Endothelial cell of umbilical vein (primary cell): ENCODE measurements at regions of chr17 and their contacts with region 1.

Region 1: DNA sequence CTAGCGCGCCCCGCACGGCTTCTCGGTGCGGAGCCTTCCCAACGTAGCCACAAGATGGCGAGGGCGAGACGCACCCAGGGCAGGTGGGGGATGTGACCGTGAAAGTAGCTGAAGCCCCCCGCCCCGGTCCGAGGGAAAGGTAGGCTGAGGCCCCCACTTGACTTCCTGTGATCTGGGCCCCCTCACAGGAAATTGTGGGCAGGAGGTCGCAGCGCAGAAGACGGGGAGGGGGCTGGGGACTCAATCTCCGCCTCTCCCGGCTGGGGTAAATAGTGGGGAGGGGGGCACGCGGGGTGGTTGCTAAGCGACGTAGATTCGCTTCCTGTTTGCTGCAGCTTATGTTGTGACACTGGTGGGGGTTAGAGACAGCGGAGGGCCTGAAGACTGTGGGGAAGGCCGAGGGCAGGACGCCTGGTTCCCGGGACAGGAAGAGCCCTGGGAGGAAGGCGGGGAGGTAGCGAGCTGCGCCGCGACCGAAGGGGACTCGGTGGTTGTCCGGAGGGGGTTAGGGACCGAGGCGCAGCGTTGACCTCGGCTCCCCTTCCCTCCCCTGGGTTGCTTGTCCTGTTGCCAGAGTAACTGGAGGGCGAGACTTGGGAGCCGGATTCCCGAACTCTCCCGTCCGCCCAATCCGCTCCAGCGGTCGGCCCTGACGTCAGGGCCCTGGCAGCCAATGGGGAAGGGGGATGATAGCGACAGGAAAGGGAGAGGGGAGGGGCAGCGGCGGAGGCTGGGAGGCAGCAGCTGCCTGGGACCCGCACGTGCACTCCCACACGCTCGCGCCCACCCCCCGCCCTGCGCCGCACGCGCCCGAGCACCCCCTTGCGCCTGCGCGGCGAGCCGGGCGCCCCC is 1.2 kb downstream of the KDM6B start:
- DNase-seq: peak; percentile 100
- H3K4me3 ChIP-seq: peak overlapping the region; percentile 34 to 52 (median 46)
- H3K27ac ChIP-seq: peak overlapping the region; percentile 94
- H3K4me1 ChIP-seq: peaks cover 32% of the 10 kb centered on the region
- H3K27me3 ChIP-seq: peaks cover 0 to 3% of the 10 kb centered on the region in 2 experiments
- CTCF ChIP-seq: peak; percentile 65 to 92
- POLR2A ChIP-seq: no peak

Region 2: DNA sequence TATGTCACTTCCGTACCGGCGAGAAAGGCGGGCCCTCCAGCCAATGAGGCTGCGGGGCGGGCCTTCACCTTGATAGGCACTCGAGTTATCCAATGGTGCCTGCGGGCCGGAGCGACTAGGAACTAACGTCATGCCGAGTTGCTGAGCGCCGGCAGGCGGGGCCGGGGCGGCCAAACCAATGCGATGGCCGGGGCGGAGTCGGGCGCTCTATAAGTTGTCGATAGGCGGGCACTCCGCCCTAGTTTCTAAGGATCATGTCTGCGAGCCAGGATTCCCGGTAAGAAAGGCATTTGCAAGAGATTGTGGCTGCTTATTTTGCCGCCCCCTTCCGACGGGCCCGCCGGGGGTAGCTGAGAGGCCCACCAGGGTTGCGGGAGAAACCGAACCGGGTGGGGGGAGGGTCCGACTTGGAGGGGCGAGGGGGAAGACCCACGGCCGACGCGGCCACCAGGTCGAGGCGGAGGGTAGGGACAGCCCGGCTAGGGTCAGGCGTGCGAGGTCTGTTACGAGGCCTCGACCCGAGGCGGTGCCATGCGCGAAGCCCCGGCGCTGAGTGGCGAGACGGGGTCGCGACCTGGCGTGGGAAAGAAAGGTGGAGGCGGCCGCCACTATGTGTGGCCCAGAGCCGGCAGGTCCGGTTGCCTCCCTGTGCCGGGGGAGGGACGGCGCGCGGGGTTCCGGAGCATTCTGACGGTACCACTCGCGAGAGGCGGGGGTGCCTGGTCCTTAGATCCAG is 262.4 kb before region 1 on chr17:
- CTCF ChIA-PET with region 1: no interaction called
- POLR2A ChIA-PET with region 1: no interaction called
- dilution Hi-C with region 1: no loop called
- intact Hi-C with region 1: loop called (anchors 5 kb)
- DNase-seq: peak; percentile 100
- H3K4me3 ChIP-seq: peak overlapping the region; percentile 86 to 96 (median 87)
- H3K27ac ChIP-seq: peak overlapping the region; percentile 91
- H3K4me1 ChIP-seq: peaks cover 43% of the 10 kb centered on the region
- H3K27me3 ChIP-seq: no peaks in the 10 kb centered on the region
- CTCF ChIP-seq: no peak
- POLR2A ChIP-seq: peak; percentile 99

Region 3: DNA sequence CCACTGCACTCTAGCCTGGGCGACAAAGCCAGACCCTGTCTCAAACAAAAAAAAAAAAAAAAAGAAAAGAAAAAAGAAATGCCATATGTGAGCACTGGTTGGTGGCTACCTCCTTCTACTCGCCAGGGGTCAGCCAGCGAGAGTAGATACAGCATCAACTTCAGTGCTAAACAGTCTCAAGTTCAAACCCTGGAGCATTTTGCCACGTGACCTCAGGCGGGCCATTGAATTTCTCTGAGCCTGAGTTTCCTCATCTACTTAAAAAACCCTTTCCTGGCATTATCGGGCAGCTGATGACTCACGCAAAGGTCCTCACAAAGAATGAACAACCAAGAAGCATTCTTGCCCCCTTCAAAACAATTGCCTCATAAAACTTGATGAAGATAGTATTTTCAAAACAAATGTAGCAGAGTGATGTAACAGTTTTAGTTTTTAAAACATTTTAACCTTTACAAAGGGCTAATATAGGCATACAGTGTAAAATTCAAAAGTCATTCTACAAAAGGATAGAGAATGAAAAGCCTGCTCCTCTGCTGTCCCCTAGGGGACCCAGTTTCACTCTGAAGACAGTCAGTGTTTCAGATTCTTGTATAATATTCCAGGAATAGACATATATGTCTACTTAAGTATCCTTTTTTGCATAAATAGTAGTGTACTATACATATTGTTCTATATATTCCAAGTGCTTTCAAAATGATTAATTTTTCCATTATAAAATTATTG is 89.3 kb before region 1 on chr17:
- CTCF ChIA-PET with region 1: interaction called, 29 read pairs
- POLR2A ChIA-PET with region 1: no interaction called
- dilution Hi-C with region 1: no loop called
- intact Hi-C with region 1: no loop called
- DNase-seq: peak; percentile 98
- H3K4me3 ChIP-seq: no peak overlapping the region
- H3K27ac ChIP-seq: peak overlapping the region; percentile 58
- H3K4me1 ChIP-seq: peaks cover 17% of the 10 kb centered on the region
- H3K27me3 ChIP-seq: peaks cover 0 to under 1% of the 10 kb centered on the region in 2 experiments
- CTCF ChIP-seq: peak in 1 of 2 donors; percentile 18
- POLR2A ChIP-seq: no peak

Region 4: GRCh38 chr17:7851438-7852256 is 16.5 kb after region 1 on chr17:
- CTCF ChIA-PET with region 1: interaction called, 28 read pairs
- POLR2A ChIA-PET with region 1: interaction called, 3 read pairs
- dilution Hi-C with region 1: no loop called
- intact Hi-C with region 1: loop called (anchors 1 kb)
- DNase-seq: peak; percentile 88
- H3K4me3 ChIP-seq: no peak overlapping the region
- H3K27ac ChIP-seq: no peak overlapping the region
- H3K4me1 ChIP-seq: peaks cover 20% of the 10 kb centered on the region
- H3K27me3 ChIP-seq: no peaks in the 10 kb centered on the region
- CTCF ChIP-seq: peak; percentile 91 to 98
- POLR2A ChIP-seq: no peak

Region 5: DNA sequence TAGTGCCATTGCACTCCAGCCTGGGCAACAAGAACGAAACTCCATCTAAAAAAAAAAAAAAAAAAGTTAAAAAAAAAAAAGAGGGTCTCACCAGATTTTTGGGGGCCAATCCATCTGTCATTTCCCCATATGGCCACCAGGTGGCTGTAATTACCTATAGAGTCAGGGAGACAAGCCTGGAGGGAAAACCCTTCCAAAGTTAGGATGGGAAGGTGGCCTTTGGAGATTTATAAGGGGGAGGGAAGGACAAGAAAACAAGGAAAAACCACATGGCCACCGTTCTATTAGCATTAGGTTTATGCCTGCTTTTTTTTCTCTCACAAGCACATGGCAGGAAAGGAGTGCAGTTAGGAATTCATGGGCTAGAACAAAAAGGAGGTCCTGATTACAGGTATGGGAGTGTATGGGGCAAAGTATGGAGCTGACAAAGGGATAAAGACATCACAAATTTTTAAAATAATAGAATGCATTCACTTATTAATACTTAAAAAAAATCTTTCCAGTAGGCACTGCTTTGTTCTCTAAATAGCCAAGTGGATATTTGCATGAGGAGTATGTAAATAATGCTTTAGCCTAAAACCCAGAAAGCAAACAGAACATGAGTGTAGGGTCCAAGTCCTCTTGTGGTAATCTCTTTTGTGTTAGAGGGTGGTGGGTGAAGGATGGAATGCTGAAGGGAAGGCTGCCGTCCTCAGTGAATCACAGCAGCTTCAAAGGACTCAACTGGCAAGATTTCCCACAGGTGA is 27.7 kb after region 1 on chr17:
- CTCF ChIA-PET with region 1: interaction called, 28 read pairs
- POLR2A ChIA-PET with region 1: no interaction called
- dilution Hi-C with region 1: no loop called
- intact Hi-C with region 1: no loop called
- DNase-seq: peak; percentile 57
- H3K4me3 ChIP-seq: no peak overlapping the region
- H3K27ac ChIP-seq: no peak overlapping the region
- H3K4me1 ChIP-seq: peaks cover 15% of the 10 kb centered on the region
- H3K27me3 ChIP-seq: no peaks in the 10 kb centered on the region
- CTCF ChIP-seq: peak; percentile 46 to 63
- POLR2A ChIP-seq: no peak

Region 6: DNA sequence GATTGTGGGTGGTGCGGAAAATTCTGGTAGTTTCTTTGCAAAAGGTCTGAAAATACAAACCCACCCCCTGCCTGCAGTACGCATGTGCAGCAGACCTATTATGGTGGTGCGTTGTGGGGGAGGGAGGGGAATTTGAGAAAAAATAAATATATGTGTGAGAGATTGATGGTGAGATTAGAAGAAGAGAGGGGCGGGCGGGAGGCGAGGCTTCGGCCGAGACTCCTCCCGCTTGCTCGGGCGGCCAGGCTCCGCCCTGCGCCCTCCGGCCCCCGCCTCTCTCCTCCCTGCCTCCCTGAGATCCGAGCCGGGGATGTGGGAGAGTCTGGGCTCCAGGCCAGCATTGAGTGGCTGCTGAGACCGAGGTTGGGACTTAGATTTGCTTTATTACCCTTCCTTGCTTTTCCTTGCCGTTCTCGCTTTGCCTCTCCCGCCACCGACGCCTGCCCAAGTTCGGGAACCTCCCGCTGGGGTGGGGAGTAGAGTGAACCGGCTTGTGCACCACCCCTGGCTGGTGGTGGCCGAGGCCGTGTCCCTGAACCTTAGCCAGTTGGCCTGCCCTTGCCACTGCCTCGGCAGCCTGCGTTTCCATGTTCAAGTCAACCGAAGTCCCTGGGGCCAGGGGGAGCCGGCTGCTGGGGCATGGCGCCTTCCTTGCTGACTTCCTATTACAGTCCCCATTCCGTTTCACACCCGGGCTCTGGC is 52.4 kb after region 1 on chr17:
- CTCF ChIA-PET with region 1: interaction called, 6 read pairs
- POLR2A ChIA-PET with region 1: no interaction called
- dilution Hi-C with region 1: no loop called
- intact Hi-C with region 1: loop called (anchors 1 kb)
- DNase-seq: peak; percentile 100
- H3K4me3 ChIP-seq: peak overlapping the region in 2 of 3 experiments; percentile 50 to 76
- H3K27ac ChIP-seq: peak overlapping the region; percentile 94
- H3K4me1 ChIP-seq: peaks cover 42% of the 10 kb centered on the region
- H3K27me3 ChIP-seq: no peaks in the 10 kb centered on the region
- CTCF ChIP-seq: no peak
- POLR2A ChIP-seq: peak; percentile 74

Region 7: DNA sequence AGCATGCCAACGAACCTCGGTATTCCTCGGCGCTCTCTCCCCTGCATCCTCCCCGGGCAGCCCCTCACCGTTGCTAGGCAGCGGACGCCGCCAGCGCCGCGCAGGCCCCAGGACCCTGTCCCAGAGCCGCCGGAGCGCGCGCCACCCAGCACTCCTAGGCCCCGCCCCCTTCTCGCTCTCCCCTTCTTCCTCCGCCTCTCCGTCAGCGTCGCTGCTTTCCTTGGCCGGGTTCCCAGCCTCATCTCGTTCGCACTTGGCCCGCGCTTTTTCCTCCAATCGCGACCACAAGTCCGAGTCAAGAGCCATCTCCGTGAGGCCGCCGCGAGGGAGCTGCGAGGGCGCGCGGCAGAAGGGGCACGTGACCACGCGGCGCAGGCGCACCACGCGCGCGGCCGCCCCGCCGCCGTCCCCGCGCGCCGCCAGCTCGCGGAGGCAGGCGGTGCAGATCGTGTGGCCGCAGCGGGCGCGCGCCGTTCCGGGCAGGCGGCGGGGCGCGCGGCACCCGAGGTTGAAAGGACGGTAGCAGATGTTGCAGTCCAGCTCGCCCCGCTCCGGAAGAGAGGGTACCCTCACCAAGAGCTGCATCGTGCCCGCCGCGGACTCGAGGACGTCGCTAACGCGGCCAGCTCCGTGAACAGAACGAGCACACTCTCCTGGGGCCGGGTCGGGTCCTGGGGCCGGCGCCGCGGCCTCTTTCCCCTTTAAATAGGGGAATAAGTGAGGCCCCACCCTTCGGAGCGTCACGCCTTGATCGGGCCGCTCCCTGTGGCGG is 80.6 kb after region 1 on chr17 and contains the start of gene RNF227:
- CTCF ChIA-PET with region 1: interaction called, 4 read pairs
- POLR2A ChIA-PET with region 1: no interaction called
- dilution Hi-C with region 1: no loop called
- intact Hi-C with region 1: loop called (anchors 1 kb)
- DNase-seq: peak; percentile 98
- H3K4me3 ChIP-seq: peak within 1 kb of the TSS in 2 of 3 experiments; percentile 24 to 44
- H3K27ac ChIP-seq: peak within 1 kb of the TSS; percentile 19
- H3K4me1 ChIP-seq: peaks cover 16% of the 10 kb centered on the region
- H3K27me3 ChIP-seq: no peaks in the 10 kb centered on the region
- CTCF ChIP-seq: no peak
- POLR2A ChIP-seq: no peak
- total RNA-seq, gene RNF227: 0.58 TPM in 2 replicates